Activated naive CD8-positive, alpha-beta T cell treated with anti-CD3 and anti-CD28 coated beads, Interleukin-2, amount 10 ng/mL, durations not matched to agents 7 days and 5 days (primary cell): ENCODE measurements at regions of chr19 and their contacts with region 1.

Region 1: DNA sequence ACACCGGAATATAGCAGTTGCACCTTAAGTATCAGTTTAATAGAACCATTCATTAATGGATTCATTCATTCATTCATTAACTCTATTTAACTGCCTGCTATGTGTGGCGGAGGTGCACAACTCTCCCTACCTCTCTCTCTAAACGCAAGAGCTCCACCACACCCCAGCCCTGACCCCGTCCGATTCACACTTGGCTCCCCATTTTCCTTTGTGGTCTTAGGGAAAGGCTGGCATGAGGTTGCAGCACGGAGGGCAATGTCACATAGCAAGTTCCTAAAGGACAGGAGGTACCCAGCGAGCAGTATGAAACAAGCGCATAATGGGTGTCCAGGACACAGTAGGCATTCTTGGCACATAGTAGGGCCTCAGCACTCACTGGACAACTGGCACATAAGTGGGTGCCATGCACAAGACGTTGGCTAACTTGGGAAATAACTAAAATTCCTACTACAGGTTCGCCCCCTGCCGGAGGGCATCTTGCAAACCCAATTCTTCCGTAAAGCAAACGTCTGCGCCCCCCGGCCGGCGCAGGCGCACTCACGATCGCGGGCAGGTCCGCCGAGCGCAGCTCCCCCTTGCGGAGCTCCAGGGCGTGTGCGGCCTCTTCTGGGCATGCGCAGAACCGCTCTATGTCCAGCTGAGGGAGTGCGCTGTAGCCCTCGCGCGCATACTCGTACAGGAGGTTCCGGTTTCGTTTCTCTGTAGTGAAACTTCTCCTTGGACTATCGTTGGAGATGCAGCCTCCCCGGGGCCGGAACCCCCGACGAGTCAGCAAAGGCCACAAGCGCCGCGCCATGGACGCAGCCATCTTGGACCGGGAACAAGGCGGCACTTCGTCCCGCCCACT is at the start of gene SARS2:
- DNase-seq: peak; percentile 96
- ATAC-seq: peak; percentile 74
- H3K4me3 Mint-ChIP-seq: peak within 1 kb of the TSS; percentile 98
- H3K27ac Mint-ChIP-seq: peak within 1 kb of the TSS; percentile 99
- H3K4me1 Mint-ChIP-seq: peaks cover 29% of the 10 kb centered on the region
- H3K27me3 Mint-ChIP-seq: no peaks in the 10 kb centered on the region
- total RNA-seq, gene SARS2: 35.6 to 40.7 TPM

Region 2: DNA sequence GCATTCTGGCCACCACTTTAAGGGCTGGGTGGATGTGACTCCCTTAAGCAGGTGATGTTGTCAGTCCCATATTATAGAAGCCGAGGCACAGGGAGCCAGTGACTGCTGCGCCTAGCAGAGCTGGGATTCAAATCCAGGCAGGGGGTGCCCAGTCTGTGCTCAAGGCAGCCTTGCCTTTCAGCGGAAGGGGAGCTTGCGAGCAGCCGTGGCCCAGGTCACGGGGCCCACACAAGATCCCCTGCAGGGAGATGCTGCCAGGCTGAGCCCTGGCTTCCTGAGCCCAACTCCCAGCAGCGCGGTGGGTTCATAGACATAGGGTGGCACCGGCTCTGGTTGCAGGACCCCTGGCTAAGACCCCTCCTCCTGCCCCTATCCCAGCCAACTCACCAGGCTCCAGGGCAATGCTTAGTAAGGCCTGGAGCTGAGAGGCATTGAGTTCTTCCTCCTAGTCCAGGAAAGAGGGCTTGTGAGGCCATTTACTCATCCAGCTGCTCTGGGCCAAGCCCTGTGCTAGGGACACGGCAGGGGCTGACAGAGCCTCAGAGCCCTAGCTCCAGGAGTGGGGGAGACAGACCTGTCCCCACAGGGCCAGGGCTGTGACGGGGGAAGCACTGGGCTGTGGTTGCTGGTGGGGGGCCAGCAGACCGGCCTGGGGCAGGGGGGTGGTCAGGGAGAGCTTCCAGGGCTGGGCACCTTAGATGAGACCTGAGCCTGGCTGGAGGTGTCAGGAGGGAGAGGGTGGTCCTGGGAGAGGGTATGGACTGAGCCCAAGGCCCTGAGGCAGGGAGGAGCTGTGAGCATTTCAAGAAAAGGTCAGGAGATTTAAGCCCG is 195.5 kb before region 1 on chr19:
- POLR2A ChIA-PET with region 1: interaction called, 11 read pairs
- DNase-seq: peak; percentile 68
- ATAC-seq: peak; percentile 53
- H3K4me3 Mint-ChIP-seq: peak overlapping the region; percentile 88
- H3K27ac Mint-ChIP-seq: peak overlapping the region; percentile 90
- H3K4me1 Mint-ChIP-seq: peaks cover 26% of the 10 kb centered on the region
- H3K27me3 Mint-ChIP-seq: no peaks in the 10 kb centered on the region